ENCODE measurements at regions of chr18 and their contacts with region 1.

Region 1: DNA sequence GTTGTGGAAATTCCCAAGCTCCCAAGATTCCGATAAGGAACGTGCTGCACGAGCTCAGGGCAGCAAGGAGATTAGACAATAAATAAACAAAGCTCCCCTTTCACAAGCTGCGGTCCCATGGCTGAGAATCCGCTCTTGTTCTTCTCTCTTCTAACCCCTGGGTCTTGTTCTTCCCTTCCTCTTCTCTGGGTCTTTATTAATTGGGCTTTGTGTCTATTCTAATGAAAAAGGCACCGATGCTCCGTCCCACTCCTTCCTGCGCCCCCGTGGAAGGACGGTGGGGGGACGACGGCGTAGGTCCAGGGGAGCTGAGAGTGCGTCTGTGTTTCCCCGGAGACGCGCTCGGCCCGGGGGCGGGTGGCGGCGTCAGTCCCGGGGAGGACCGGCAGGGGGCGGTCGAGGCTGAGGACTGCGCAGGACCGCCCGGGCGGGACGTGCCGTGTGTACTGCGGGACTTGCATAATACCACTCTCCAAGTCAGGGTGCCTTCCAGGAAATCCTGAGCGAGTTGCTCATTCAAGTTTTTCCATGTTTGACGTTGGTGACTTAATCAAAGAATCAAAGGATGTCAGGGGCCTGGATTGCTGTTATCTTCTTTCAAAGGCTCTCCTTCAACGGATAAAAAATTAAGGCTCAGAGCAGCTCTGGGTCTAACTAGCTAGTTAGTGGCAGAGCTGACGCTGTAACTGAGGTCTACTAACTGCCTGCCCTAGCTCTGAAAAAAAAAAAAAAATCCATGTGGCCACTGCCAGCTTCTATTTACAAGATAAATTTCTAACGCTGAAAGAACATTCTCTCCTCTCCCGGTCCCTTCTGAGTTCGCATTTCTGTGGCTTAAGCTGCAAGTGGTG is 321.4 kb downstream of the TGIF1 start:
- DNase-seq: peak; percentile 65
- H3K4me3 ChIP-seq: peak overlapping the region; percentile 38
- CTCF ChIP-seq: peak; percentile 93

Region 2: DNA sequence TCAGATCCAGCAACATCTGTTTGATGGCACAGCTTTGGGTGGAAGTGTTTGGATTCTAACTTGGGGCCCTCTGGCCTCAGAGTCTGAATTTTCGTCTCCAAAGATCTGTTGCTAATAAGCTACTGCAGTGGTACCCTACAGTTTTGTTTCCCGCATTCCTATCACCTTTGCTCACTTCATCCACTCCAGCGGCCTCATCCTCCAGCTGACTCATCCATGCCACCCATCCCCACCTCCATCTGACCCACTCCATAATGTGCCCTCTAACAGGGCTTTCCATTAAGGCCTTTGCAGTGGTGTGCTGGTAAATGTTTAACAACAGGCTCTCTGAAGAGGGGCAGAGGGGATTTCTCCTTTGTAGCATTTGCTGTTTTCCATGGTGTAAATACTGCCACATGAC is 95.9 kb before region 1 on chr18:
- in situ Hi-C with region 1: no loop called
- DNase-seq: no peak
- H3K4me3 ChIP-seq: no peak overlapping the region
- CTCF ChIP-seq: no peak

Region 3: GRCh38 chr18:3722320-3723000 is 48.9 kb before region 1 on chr18:
- in situ Hi-C with region 1: no loop called
- DNase-seq: no peak
- H3K4me3 ChIP-seq: no peak overlapping the region
- CTCF ChIP-seq: no peak

Region 4: DNA sequence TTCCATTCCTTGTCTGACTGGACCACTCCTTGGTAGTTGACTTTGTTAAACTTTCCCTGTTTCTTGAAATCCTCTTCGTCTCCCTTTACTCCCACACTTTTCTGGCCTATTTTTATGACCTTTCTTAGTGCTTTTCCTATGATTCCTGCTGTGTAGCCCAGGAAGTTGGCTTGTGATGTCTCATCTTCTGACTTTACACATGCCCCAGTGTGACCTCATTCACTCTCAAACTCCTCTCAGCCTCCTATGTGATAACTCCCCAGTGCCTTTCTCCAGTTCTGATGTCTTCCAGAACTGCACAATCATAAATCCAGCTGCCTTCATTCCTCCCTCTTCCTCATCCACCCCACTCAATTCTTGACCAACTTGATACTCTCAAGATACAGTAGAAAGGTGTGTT is 86.2 kb after region 1 on chr18:
- in situ Hi-C with region 1: no loop called
- DNase-seq: no peak
- H3K4me3 ChIP-seq: no peak overlapping the region
- CTCF ChIP-seq: no peak

Region 5: GRCh38 chr18:3869848-3870247 is 98.5 kb after region 1 on chr18:
- in situ Hi-C with region 1: loop called (anchors 5 kb)
- DNase-seq: peak; percentile 52
- H3K4me3 ChIP-seq: no peak overlapping the region
- CTCF ChIP-seq: peak; percentile 42

Region 6: GRCh38 chr18:3995476-3996102 is 224.2 kb after region 1 on chr18:
- in situ Hi-C with region 1: loop called (anchors 25 kb)
- DNase-seq: peak; percentile 76
- H3K4me3 ChIP-seq: no peak overlapping the region
- CTCF ChIP-seq: peak; percentile 91